A673 (cell line): ENCODE measurements at regions of chr3 and their contacts with region 1.

Region 1: GRCh38 chr3:152737021-152737908 is 97.7 kb upstream of the P2RY1 start:
- DNase-seq: no peak
- H3K4me3 ChIP-seq: no peak overlapping the region
- H3K27ac ChIP-seq: no peak overlapping the region
- H3K4me1 ChIP-seq: peaks cover 3% of the 10 kb centered on the region
- H3K27me3 ChIP-seq: no peaks in the 10 kb centered on the region
- CTCF ChIP-seq: no peak

Region 2: DNA sequence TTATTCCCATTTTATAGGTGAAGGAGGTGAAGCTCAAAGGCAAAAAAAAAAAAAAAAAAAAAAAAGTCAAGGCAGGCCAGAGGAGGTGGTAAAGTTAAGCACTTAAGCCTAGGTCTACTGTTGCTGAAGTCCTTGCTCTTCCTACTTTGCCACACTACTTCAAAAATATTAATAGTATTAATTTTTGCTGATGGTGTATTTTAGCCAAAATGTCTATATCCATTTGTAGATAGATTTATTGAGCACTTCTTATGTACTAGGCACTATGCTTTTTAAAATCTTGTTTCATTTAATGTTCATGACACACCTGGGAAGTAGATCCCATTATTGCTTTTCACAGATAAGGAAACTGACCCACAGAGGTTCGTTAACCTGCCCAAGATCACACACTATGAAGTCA is 149.4 kb before region 1 on chr3:
- CTCF ChIA-PET with region 1: interaction called, 16 read pairs
- POLR2A ChIA-PET with region 1: no interaction called
- intact Hi-C with region 1: no loop called
- DNase-seq: no peak
- H3K4me3 ChIP-seq: no peak overlapping the region
- H3K27ac ChIP-seq: no peak overlapping the region
- H3K4me1 ChIP-seq: peaks cover 4% of the 10 kb centered on the region
- H3K27me3 ChIP-seq: no peaks in the 10 kb centered on the region
- CTCF ChIP-seq: no peak

Region 3: DNA sequence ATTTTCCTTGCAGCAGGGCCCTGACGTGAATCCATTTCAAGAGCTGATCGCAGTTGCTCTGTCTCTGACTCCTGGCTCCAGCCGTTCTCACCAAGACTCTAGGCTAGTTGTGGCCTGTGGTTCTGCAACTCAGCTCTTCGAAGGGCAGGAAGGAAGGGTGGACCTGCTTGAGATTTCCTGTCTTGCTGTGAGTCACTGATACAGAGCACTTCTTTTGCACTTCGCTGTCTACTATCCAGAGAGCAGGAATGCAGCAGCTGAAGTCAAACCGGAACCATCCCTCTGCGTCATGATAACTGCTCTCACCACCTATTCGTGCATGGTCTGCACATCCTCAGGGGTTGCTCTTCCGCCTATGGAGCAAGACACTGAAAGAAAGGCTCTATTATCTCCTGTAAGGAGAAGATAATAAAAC is 484.5 kb after region 1 on chr3:
- CTCF ChIA-PET with region 1: no interaction called
- POLR2A ChIA-PET with region 1: no interaction called
- intact Hi-C with region 1: no loop called
- DNase-seq: peak; percentile 96
- H3K4me3 ChIP-seq: peak overlapping the region; percentile 12
- H3K27ac ChIP-seq: peak overlapping the region; percentile 81
- H3K4me1 ChIP-seq: peaks cover 9% of the 10 kb centered on the region
- H3K27me3 ChIP-seq: no peaks in the 10 kb centered on the region
- CTCF ChIP-seq: no peak